ENCODE measurements at regions of chr3 and their contacts with region 1.

Region 1: DNA sequence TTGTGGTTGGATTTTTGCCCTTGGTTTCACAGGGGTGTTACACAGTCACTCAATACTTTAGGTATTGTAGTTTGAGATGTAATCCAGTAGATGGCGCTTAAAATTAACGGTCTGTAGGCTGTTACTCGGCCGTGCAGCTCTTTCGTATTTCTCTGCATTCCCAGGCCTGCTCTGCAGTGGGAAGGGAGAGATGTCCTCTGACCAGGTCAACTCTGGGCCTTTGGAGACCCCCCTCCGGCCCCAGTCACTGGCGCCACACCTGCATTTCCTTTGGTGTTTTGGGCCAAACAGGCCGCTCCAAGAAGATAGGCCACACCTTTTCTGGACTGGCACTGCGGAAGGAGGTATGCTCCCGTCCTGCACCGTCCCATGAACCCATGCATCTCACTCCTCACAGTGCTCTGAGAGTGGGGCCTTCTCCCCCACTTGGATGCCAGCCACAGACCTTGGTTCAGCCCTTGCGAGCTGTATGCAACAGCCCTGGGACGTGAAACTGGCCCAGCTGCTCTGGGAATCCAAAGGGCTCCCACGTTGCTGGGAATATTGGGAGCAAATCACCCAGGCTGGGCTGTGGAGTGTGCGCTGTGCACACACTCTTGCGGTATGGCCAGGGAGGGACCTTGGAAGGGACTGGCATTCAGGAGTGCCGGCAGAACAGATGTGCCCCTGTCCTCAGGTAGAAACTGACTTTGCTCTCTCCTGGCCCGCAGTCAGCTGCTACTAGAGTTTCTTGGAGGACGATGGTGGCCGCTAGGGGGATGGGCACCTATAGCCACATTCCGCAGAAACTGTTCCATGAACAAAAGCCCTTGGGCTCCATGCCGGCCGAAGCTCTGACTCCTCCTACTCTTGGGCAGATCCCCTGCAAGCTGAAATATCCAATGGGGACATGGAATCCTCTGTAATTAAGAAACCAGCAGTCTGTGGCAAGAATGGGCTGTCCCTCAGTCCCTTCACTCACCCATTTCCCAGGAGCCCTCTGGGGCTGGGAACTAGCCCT is 410.5 kb upstream of the CADM2 start:
- DNase-seq: peak in 1 of 2 donors; percentile 42
- H3K4me3 ChIP-seq: no peak overlapping the region
- H3K27ac ChIP-seq: no peak overlapping the region
- H3K4me1 ChIP-seq: no peaks in the 10 kb centered on the region
- H3K27me3 ChIP-seq: no peaks in the 10 kb centered on the region
- CTCF ChIP-seq: peak in 4 of 7 experiments; percentile 16 to 35 (median 34)
- EP300 ChIP-seq: no peak
- POLR2A ChIP-seq: no peak

Region 2: GRCh38 chr3:84440306-84440705 is 108.0 kb before region 1 on chr3:
- intact Hi-C with region 1: no loop called
- DNase-seq: no peak
- H3K4me3 ChIP-seq: no peak overlapping the region
- H3K27ac ChIP-seq: no peak overlapping the region
- H3K4me1 ChIP-seq: no peaks in the 10 kb centered on the region
- H3K27me3 ChIP-seq: no peaks in the 10 kb centered on the region
- CTCF ChIP-seq: no peak
- EP300 ChIP-seq: no peak
- POLR2A ChIP-seq: no peak

Region 3: DNA sequence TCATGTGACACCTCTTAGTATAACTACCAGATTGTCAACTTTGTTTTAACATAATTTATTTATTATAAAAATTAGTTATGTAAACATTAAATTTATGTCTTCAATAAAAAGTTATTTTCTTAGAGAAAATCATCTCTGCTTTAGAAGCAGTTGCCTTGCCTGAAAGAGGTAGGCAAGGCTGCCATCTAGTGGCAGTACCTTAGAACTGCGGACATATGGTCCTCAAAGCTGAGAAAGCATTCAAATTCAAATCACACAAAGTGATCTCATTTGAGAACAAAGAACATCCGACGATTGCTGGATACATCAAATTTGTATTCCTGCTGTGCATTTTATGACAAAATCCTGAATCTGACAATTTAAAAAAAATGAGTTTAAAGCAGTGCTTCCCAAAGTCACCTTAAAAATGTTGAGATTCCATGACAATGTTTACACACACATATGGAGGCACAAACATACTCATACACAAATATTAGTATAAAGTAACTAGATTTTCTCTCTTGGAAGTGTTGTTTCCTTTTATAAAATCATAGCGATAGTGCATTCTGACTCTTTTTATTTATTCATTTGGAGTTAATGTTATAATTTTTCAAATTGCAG is 1027.9 kb after region 1 on chr3:
- intact Hi-C with region 1: loop called (anchors 10 kb)
- DNase-seq: peak; percentile 70 to 82
- H3K4me3 ChIP-seq: no peak overlapping the region
- H3K27ac ChIP-seq: no peak overlapping the region
- H3K4me1 ChIP-seq: no peaks in the 10 kb centered on the region
- H3K27me3 ChIP-seq: no peaks in the 10 kb centered on the region
- CTCF ChIP-seq: peak in 5 of 7 experiments; percentile 23 to 80 (median 68)
- EP300 ChIP-seq: no peak
- POLR2A ChIP-seq: no peak

Measured in stomach (tissue), 19 donors.